Sciatic nerve (tissue), 2 donors: ENCODE measurements at regions of chrX and their contacts with region 1.

Region 1: GRCh38 chrX:39705299-39705698 is 392.5 kb downstream of the BCOR start:
- DNase-seq: peak; percentile 68
- ATAC-seq: peak; percentile 76

Region 2: GRCh38 chrX:38138900-38139299 is 1566.4 kb before region 1 on chrX:
- intact Hi-C with region 1: no loop called
- DNase-seq: no peak
- ATAC-seq: no peak

Region 3: GRCh38 chrX:39745818-39746217 is 40.5 kb after region 1 on chrX:
- intact Hi-C with region 1: loop called (anchors 2 kb)
- DNase-seq: no peak
- ATAC-seq: no peak

Region 4: DNA sequence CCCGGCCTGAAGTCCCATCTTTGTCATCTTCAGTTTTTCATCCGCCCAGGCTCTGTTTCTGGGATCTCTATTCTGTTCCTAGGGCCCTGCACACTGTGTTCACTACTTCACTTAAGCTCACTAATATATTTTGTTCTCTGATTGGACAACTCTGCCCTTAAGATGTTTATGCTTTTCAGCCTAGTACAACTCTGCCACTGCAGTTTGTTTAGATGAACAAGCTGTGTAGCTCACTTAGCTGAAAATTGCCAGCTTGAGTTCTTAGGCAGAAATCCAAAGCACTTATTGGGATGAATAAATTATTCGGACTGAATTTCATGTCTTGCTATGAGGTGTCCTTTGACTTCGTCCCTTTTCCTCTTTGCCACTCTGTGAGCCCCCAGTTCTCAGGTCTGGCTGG is 1802.6 kb after region 1 on chrX:
- intact Hi-C with region 1: no loop called
- DNase-seq: no peak
- ATAC-seq: no peak